ENCODE measurements at regions of chr9 and their contacts with region 1.

Region 1: DNA sequence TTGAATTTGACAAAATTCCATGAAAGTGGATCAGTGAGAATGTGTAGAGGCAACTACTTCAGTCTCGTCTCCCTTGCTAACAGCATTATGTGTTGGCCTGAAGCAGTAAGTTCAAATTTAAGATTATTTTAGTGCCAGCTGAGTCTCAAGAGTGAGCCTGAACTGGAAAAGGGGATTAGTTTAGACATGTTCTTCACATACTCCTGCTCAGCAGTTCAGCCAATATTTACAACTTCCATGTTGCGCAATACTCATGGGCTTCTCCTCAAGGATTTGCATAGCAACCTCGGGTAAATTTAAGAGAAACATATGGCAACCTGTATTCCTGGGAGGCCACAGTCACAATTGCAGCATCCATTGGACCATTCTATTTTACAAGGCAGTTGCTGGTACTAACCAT is 553.8 kb downstream of the PTPRD start:
- DNase-seq: no peak
- H3K4me3 ChIP-seq: no peak overlapping the region
- H3K27ac ChIP-seq: no peak overlapping the region
- H3K4me1 ChIP-seq: no peaks in the 10 kb centered on the region
- H3K27me3 ChIP-seq: no peaks in the 10 kb centered on the region
- CTCF ChIP-seq: no peak
- EP300 ChIP-seq: no peak
- POLR2A ChIP-seq: no peak

Region 2: GRCh38 chr9:10130061-10130675 is 71.1 kb after region 1 on chr9:
- in situ Hi-C with region 1: no loop called
- intact Hi-C with region 1: no loop called
- DNase-seq: no peak
- H3K4me3 ChIP-seq: no peak overlapping the region
- H3K27ac ChIP-seq: no peak overlapping the region
- H3K4me1 ChIP-seq: no peaks in the 10 kb centered on the region
- H3K27me3 ChIP-seq: no peaks in the 10 kb centered on the region
- CTCF ChIP-seq: no peak
- EP300 ChIP-seq: no peak
- POLR2A ChIP-seq: no peak

Region 3: DNA sequence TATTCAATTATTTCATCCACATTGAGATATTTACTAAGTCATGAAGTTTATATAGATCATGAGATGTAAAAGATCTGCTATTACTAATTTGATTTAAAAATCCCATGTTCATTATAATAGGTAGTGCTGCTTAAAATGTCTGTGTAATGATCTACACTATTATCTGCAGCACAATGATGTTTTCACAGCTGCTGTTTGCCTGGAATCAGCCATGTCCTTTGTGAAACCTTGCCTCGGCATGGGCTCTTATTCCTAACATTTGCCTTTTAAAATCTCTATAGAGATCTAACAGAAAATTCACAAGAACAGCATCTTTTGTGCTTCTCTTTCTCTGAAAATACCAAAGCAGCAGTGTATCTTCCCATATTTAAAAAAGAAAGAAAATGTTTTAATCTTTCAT is 109.2 kb after region 1 on chr9:
- in situ Hi-C with region 1: loop called in 1 of 4 experiments (anchors 25 kb)
- intact Hi-C with region 1: no loop called
- DNase-seq: no peak
- H3K4me3 ChIP-seq: no peak overlapping the region
- H3K27ac ChIP-seq: no peak overlapping the region
- H3K4me1 ChIP-seq: no peaks in the 10 kb centered on the region
- H3K27me3 ChIP-seq: no peaks in the 10 kb centered on the region
- CTCF ChIP-seq: no peak
- EP300 ChIP-seq: no peak
- POLR2A ChIP-seq: no peak

Region 4: DNA sequence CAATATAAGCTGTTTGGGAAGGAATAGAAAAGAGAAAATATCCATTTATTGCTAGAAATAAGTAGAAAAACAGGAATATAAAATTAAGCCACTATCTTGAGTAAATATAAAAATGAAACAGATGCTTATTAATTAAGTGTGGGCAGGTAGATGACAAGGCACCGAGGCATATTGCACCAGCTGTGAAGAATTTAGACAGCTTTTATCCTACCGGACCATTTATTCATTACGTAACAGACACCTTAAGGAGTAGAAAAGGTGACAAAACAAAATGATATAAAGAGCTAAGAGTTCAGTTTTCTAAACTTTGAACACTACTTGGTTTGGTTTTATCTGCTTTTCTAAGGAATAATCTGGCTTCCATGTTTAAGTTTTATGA is 149.6 kb after region 1 on chr9:
- in situ Hi-C with region 1: no loop called
- intact Hi-C with region 1: no loop called
- DNase-seq: no peak
- H3K4me3 ChIP-seq: peak overlapping the region in 1 of 4 donors; percentile 9
- H3K27ac ChIP-seq: no peak overlapping the region
- H3K4me1 ChIP-seq: no peaks in the 10 kb centered on the region
- H3K27me3 ChIP-seq: no peaks in the 10 kb centered on the region
- CTCF ChIP-seq: no peak
- EP300 ChIP-seq: no peak
- POLR2A ChIP-seq: no peak

Measured in transverse colon (tissue), 4 donors.